Naive thymus-derived CD4-positive, alpha-beta T cell (primary cell): ENCODE measurements at regions of chr17 and their contacts with region 1.

Region 1: DNA sequence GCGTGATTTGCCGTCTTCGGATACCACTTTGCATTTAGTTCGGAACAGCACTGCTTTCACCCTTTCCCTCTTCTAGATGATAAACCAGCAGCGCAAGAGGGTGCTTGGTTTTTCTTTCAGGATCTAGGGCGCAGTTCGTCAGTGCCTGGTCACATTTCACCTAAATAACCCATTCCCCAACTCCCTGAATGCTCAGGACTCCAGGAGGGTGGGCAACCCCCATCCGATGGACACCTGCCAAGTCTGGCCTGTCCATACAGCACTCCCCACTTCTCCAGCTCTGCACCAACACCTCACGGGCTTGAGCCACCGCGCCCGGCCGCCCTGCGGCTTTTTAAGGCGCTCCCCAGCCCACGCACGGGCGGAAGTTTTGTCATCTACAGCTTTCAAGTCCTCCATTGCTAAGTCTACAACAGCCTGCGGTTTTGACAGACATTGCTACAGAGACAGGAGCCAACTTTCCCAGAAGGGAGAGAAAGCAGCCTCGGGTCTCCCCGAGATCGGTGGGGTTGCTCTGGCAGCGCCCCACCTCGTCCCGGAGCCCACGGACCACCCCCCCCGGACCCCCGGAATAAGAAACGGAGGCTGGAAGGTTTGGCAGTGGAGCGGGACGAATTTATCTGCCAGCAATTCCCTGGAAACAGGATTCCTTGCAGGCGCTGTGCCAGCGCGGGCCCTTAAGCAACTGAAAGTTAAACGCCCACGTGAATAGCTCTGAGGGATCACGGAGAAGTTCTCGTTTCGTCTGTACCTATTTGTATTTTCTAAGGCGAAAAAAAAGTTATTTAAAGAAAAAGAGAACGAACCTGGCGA is 38.6 kb upstream of the SLFN13 start:
- DNase-seq: peak; percentile 39 to 88 (median 77)
- ATAC-seq: peak; percentile 85
- H3K4me3 ChIP-seq: peak overlapping the region; percentile 90
- H3K4me3 Mint-ChIP-seq: peak overlapping the region; percentile 80 to 99 (median 94)
- H3K27ac ChIP-seq: peak overlapping the region; percentile 82
- H3K27ac Mint-ChIP-seq: peak overlapping the region; percentile 84 to 98 (median 97)
- H3K4me1 ChIP-seq: peaks cover 10 to 24% of the 10 kb centered on the region in 2 donors
- H3K4me1 Mint-ChIP-seq: peaks cover 23 to 67% (median 45%) of the 10 kb centered on the region in 7 donors
- H3K27me3 ChIP-seq: no peaks in the 10 kb centered on the region
- H3K27me3 Mint-ChIP-seq: peaks cover 0 to 12% (median 0%) of the 10 kb centered on the region in 5 donors

Region 2: GRCh38 chr17:35161281-35161761 is 325.8 kb before region 1 on chr17:
- CTCF ChIA-PET with region 1: no interaction called
- POLR2A ChIA-PET with region 1: interaction called, 3 read pairs
- intact Hi-C with region 1: loop called in 1 of 2 experiments (anchors 5 kb)
- DNase-seq: peak in 7 of 9 donors; percentile 31 to 68 (median 55)
- ATAC-seq: peak; percentile 77
- H3K4me3 ChIP-seq: peak overlapping the region; percentile 30
- H3K4me3 Mint-ChIP-seq: peak overlapping the region; percentile 41 to 83 (median 72)
- H3K27ac ChIP-seq: peak overlapping the region; percentile 75
- H3K27ac Mint-ChIP-seq: peak overlapping the region; percentile 65 to 96 (median 90)
- H3K4me1 ChIP-seq: peaks cover 40 to 52% of the 10 kb centered on the region in 2 donors
- H3K4me1 Mint-ChIP-seq: peaks cover 34 to 76% (median 70%) of the 10 kb centered on the region in 7 donors
- H3K27me3 ChIP-seq: no peaks in the 10 kb centered on the region
- H3K27me3 Mint-ChIP-seq: peaks cover 0 to 11% (median 0%) of the 10 kb centered on the region in 5 donors

Region 3: GRCh38 chr17:35312790-35313711 is 174.1 kb before region 1 on chr17:
- CTCF ChIA-PET with region 1: interaction called, 13 read pairs
- POLR2A ChIA-PET with region 1: interaction called, 39 read pairs
- intact Hi-C with region 1: loop called (anchors 1 kb)
- DNase-seq: peak; percentile 56 to 96 (median 90)
- ATAC-seq: peak; percentile 93
- H3K4me3 ChIP-seq: peak overlapping the region; percentile 70
- H3K4me3 Mint-ChIP-seq: peak overlapping the region; percentile 88 to 98 (median 96)
- H3K27ac ChIP-seq: peak overlapping the region; percentile 73
- H3K27ac Mint-ChIP-seq: peak overlapping the region; percentile 94 to 99 (median 98)
- H3K4me1 ChIP-seq: peaks cover 12 to 13% of the 10 kb centered on the region in 2 donors
- H3K4me1 Mint-ChIP-seq: peaks cover 37 to 79% (median 69%) of the 10 kb centered on the region in 7 donors
- H3K27me3 ChIP-seq: no peaks in the 10 kb centered on the region
- H3K27me3 Mint-ChIP-seq: peaks cover 0 to 5% (median 0%) of the 10 kb centered on the region in 5 donors

Region 4: DNA sequence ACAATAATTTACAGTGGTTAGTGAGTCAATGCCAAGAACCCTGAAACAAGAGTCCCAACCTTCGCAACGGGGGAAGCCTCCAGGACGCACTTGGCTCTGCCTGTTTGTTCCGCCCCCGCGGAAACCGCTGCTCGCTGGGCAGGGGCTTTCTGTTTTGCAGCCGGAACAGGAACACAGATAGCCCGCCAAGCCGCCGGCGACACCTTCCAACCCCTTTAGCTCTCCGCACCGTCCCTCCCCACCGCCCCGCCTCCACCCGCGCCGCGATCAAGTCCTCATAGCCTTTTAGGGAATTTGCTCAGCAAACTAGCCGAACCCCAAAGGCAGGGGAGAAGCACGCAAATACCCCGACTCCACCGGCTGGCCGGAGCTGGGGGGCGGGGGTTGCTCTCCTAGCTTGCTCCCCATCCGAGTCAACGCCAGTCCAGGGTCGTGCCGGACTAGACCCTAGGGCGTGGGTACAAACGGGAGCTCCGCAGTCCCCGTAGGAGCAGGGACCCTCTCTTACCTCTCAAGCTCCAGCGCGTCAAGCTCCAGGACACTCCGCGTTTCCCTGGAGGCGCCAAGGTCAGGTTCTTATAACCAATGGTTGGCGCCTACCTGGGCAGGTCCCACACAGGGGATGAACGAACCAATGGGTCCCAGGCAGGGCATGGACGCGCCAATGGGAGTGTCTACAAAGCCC is 38.8 kb before region 1 on chr17 and contains the start of gene SLFN13:
- CTCF ChIA-PET with region 1: no interaction called
- POLR2A ChIA-PET with region 1: interaction called, 28 read pairs
- intact Hi-C with region 1: loop called (anchors 2 to 5 kb)
- DNase-seq: peak; percentile 59 to 89 (median 74)
- ATAC-seq: peak; percentile 94
- H3K4me3 ChIP-seq: peak within 1 kb of the TSS; percentile 57
- H3K4me3 Mint-ChIP-seq: peak within 1 kb of the TSS; percentile 75 to 94 (median 87)
- H3K27ac ChIP-seq: peak within 1 kb of the TSS; percentile 69
- H3K27ac Mint-ChIP-seq: peak within 1 kb of the TSS; percentile 76 to 94 (median 83)
- H3K4me1 ChIP-seq: peaks cover 7 to 14% of the 10 kb centered on the region in 2 donors
- H3K4me1 Mint-ChIP-seq: peaks cover 0 to 33% (median 26%) of the 10 kb centered on the region in 7 donors
- H3K27me3 ChIP-seq: no peaks in the 10 kb centered on the region
- H3K27me3 Mint-ChIP-seq: no peaks in the 10 kb centered on the region
- total RNA-seq, gene SLFN13: 10.5 to 64.7 (median 21.0) TPM

Region 5: DNA sequence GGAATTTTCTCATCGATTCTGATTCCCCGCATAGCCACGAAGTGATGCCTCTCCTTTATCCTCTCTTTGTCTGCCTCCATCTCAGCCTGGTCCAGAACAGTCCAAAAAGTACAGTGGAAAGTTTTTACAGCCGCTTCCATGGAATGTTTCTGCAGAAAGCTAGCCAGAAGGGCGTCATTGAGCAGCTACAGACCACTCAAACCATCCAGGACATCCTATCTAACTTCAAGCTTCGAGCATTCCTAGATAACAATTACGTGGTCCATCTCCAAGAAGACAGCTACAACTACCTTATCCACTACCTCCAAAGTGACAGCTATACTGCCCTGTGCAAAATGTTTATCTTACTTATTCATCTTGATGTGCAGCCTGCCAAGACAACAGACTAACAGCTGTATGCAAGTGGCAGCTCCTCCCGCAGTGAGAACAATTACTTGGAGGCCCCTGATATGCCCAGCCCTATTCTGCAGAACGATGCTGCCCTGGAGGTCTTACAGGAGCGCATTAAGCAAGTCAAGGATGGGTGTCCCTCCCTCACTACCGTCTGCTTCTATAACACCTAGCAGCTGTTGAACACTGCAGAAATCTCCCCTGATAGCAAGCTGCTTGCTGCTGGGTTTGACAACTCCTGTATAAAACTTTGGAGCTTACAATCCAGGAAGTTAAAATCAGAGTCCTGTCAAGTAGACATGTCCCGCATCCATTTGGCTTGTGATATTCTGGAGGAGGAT is 11.5 kb after region 1 on chr17:
- CTCF ChIA-PET with region 1: interaction called, 3 read pairs
- POLR2A ChIA-PET with region 1: interaction called, 23 read pairs
- intact Hi-C with region 1: no loop called
- DNase-seq: no peak
- ATAC-seq: no peak
- H3K4me3 ChIP-seq: no peak overlapping the region
- H3K4me3 Mint-ChIP-seq: peak overlapping the region; percentile 24 to 83 (median 66)
- H3K27ac ChIP-seq: no peak overlapping the region
- H3K27ac Mint-ChIP-seq: peak overlapping the region in 6 of 9 donors; percentile 26 to 75 (median 40)
- H3K4me1 ChIP-seq: peaks cover 4 to 6% of the 10 kb centered on the region in 2 donors
- H3K4me1 Mint-ChIP-seq: peaks cover 42 to 86% (median 71%) of the 10 kb centered on the region in 7 donors
- H3K27me3 ChIP-seq: no peaks in the 10 kb centered on the region
- H3K27me3 Mint-ChIP-seq: no peaks in the 10 kb centered on the region

Region 6: DNA sequence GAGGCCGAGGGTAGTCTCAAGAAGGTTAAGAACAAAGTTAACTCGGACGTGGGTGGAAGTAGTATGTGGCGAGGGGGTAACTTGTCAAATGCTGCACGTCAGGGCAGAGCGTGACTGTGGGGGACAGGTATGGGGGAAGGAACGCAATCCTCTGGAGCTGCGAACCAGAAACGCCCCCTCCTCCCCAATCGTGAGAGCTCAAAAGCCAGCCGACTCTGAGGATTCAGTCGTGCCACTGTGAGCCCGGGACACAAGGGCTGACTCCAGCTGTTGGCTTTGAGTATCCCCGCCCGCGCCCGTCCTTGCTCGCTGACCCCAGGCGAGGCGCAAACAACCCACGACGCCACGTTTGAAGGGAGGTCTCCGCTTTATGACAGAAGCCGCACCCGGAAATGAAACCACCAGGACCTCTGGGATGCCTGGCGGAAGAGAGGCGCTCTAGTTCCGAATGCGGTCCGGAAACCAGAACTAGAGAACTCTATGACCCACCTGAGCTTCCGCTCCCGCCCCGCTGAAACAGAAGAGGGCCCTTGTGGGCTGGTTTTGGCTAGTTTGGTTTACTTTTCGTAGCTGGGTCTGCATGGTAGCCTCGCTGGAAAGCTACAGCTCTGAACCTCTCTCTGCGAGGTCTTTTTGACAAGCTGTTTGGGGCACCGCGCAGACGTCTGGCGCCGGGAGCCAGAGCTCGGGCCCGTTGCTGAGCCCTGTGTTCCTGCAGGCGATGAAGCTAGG is 91.2 kb after region 1 on chr17 and contains the start of gene PEX12:
- CTCF ChIA-PET with region 1: no interaction called
- POLR2A ChIA-PET with region 1: interaction called, 13 read pairs
- intact Hi-C with region 1: loop called in 1 of 2 experiments (anchors 5 kb)
- DNase-seq: peak; percentile 62 to 94 (median 89)
- ATAC-seq: peak; percentile 99
- H3K4me3 ChIP-seq: peak within 1 kb of the TSS; percentile 86
- H3K4me3 Mint-ChIP-seq: peak within 1 kb of the TSS; percentile 92 to 100 (median 97)
- H3K27ac ChIP-seq: peak within 1 kb of the TSS; percentile 92
- H3K27ac Mint-ChIP-seq: peak within 1 kb of the TSS; percentile 96 to 100 (median 99)
- H3K4me1 ChIP-seq: peaks cover 5 to 12% of the 10 kb centered on the region in 2 donors
- H3K4me1 Mint-ChIP-seq: peaks cover 6 to 40% (median 32%) of the 10 kb centered on the region in 7 donors
- H3K27me3 ChIP-seq: no peaks in the 10 kb centered on the region
- H3K27me3 Mint-ChIP-seq: peaks cover 0 to 2% (median 0%) of the 10 kb centered on the region in 5 donors
- total RNA-seq, gene PEX12: 2.9 to 8.0 (median 5.3) TPM